Body of pancreas (tissue), 4 donors: ENCODE measurements at regions of chr22 and their contacts with region 1.

Region 1: GRCh38 chr22:34414484-34415440 is 494.5 kb upstream of the LARGE1 start:
- DNase-seq: peak; percentile 42 to 52 (median 48)
- ATAC-seq: peak; percentile 58
- H3K4me3 ChIP-seq: no peak overlapping the region
- H3K27ac ChIP-seq: no peak overlapping the region
- H3K4me1 ChIP-seq: no peaks in the 10 kb centered on the region
- H3K27me3 ChIP-seq: no peaks in the 10 kb centered on the region
- CTCF ChIP-seq: peak; percentile 12 to 75 (median 61)
- POLR2A ChIP-seq: no peak

Region 2: DNA sequence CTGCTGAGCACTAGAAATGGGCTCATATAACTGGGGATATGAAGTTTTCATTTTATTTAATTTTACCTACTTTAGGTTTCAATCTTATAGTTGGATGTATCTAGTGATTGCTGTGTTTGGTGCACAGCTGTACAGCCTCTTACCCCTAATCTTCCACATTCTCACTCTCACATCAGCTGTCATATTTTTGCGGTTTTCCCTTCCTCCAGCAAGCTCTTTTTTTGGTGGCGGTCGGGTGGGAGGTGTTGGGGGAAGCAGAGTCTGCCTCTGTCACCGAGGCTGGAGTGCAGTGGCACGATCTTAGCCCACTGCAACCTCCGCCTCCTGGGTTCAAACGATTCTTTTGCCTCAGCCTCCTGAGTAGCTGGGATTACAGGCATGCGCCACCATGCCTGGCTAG is 206.1 kb after region 1 on chr22:
- intact Hi-C with region 1: no loop called
- DNase-seq: no peak
- ATAC-seq: no peak
- H3K4me3 ChIP-seq: no peak overlapping the region
- H3K27ac ChIP-seq: no peak overlapping the region
- H3K4me1 ChIP-seq: no peaks in the 10 kb centered on the region
- H3K27me3 ChIP-seq: no peaks in the 10 kb centered on the region
- CTCF ChIP-seq: no peak
- POLR2A ChIP-seq: no peak

Region 3: GRCh38 chr22:35023692-35024363 is 609.1 kb after region 1 on chr22:
- intact Hi-C with region 1: loop called (anchors 10 kb)
- DNase-seq: peak; percentile 50 to 78 (median 64)
- ATAC-seq: no peak
- H3K4me3 ChIP-seq: no peak overlapping the region
- H3K27ac ChIP-seq: no peak overlapping the region
- H3K4me1 ChIP-seq: no peaks in the 10 kb centered on the region
- H3K27me3 ChIP-seq: no peaks in the 10 kb centered on the region
- CTCF ChIP-seq: peak; percentile 64 to 92 (median 72)
- POLR2A ChIP-seq: no peak